AG04449 (cell line): ENCODE measurements at regions of chr1 and their contacts with region 1.

Region 1: GRCh38 chr1:13792419-13792818 is 92.4 kb downstream of the PRDM2 start:
- DNase-seq: peak; percentile 55
- H3K4me3 ChIP-seq: no peak overlapping the region
- CTCF ChIP-seq: no peak

Region 2: DNA sequence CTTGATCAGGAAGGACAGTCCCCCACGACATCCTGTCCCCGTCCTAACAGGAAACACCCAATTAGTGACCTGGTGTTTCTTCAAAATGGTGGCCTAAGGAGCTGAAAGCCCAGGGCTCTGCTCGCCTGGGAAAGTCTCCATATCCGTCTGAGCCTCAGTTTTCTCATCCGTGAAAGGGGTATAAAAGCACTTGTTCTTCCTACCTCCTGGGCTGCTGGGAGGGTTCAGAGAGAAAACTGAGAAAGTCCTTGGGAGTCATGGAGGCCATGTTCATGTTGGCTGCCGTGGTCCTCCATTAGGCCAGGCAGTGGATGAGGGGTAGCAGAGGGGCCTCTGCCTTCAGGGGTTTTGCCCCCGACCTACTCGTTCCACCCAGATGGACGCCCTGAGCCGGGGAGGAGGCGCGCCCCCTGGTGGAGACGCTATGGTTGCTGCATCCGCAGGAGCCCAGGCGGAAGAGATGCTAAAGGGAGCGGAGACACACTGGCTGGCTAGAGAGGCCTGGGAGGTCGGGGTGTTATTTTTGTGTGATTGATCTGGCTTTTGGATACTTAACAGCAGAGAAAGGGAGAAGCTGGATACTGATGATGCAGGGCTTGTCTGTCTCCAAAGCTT is 21.1 kb after region 1 on chr1:
- CTCF ChIA-PET with region 1: interaction called, 10 read pairs
- POLR2A ChIA-PET with region 1: no interaction called
- DNase-seq: no peak
- H3K4me3 ChIP-seq: no peak overlapping the region
- CTCF ChIP-seq: peak; percentile 85